Heart left ventricle (tissue), 16 donors: ENCODE measurements at regions of chr5 and their contacts with region 1.

Region 1: DNA sequence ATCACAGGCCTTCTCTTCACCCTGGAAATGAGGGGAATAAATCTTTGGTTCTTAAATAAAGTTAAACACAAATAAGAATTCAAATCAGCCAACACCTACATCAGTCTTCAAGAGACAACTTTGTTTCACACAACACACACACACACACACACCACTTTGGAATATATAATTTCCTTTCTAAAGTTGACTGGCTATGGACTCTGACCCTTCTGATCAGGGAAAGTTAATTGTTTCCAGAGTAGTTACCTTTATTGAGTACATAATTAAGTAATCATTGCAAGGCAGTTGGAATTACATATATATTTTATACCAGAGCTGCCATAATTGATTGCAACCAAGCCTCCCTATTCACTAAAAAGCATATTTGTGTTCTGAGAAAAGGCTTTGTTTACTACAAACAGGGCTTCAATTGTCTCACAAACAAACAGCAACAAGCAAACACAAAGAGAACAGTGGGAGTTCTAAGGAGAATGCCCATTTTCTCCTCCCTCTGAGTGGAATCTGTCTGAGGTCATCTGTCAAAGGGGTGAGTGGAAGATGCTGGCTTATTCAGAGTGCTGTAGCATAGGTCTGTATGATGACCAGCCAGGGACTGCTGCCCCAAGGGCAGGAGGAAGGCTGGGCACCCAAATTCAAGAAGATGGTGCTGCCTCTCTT is 136.6 kb downstream of the SEMA6A start:
- DNase-seq: no peak
- ATAC-seq: no peak
- H3K4me3 ChIP-seq: no peak overlapping the region
- H3K27ac ChIP-seq: peak overlapping the region in 1 of 12 donors; percentile 10
- H3K4me1 ChIP-seq: peaks cover 0 to 45% (median 13%) of the 10 kb centered on the region in 12 donors
- H3K27me3 ChIP-seq: no peaks in the 10 kb centered on the region
- CTCF ChIP-seq: no peak
- POLR2A ChIP-seq: no peak

Region 2: GRCh38 chr5:116374434-116374852 is 63.6 kb before region 1 on chr5:
- intact Hi-C with region 1: loop called in 1 of 10 experiments (anchors 5 kb)
- DNase-seq: no peak
- ATAC-seq: peak in 1 of 4 donors; percentile 30
- H3K4me3 ChIP-seq: no peak overlapping the region
- H3K27ac ChIP-seq: peak overlapping the region in 5 of 12 donors; percentile 13 to 38 (median 26)
- H3K4me1 ChIP-seq: peaks cover 0 to 38% (median 12%) of the 10 kb centered on the region in 12 donors
- H3K27me3 ChIP-seq: no peaks in the 10 kb centered on the region
- CTCF ChIP-seq: no peak
- POLR2A ChIP-seq: no peak

Region 3: GRCh38 chr5:116395631-116396203 is 42.3 kb before region 1 on chr5:
- intact Hi-C with region 1: loop called in 1 of 10 experiments (anchors 5 kb)
- DNase-seq: no peak
- ATAC-seq: peak; percentile 35 to 68 (median 56)
- H3K4me3 ChIP-seq: no peak overlapping the region
- H3K27ac ChIP-seq: peak overlapping the region in 9 of 12 donors; percentile 16 to 74 (median 40)
- H3K4me1 ChIP-seq: peaks cover 4 to 27% (median 19%) of the 10 kb centered on the region in 12 donors
- H3K27me3 ChIP-seq: no peaks in the 10 kb centered on the region
- CTCF ChIP-seq: no peak
- POLR2A ChIP-seq: no peak

Region 4: GRCh38 chr5:116652196-116652729 is 214.2 kb after region 1 on chr5:
- intact Hi-C with region 1: no loop called
- DNase-seq: peak in 4 of 5 donors; percentile 57 to 86 (median 75)
- ATAC-seq: peak in 3 of 4 donors; percentile 93 to 97 (median 94)
- H3K4me3 ChIP-seq: no peak overlapping the region
- H3K27ac ChIP-seq: peak overlapping the region in 5 of 12 donors; percentile 11 to 47 (median 30)
- H3K4me1 ChIP-seq: peaks cover 0 to 18% (median 1%) of the 10 kb centered on the region in 12 donors
- H3K27me3 ChIP-seq: no peaks in the 10 kb centered on the region
- CTCF ChIP-seq: no peak
- POLR2A ChIP-seq: no peak